RWPE1 (cell line): ENCODE measurements at regions of chr3 and their contacts with region 1.

Region 1: GRCh38 chr3:184561061-184561912 is at the start of gene EPHB3:
- DNase-seq: peak; percentile 99
- H3K27ac ChIP-seq: peak within 1 kb of the TSS; percentile 97
- CTCF ChIP-seq: peak; percentile 97

Region 2: GRCh38 chr3:184549793-184550577 is 11.3 kb before region 1 on chr3:
- CTCF ChIA-PET with region 1: interaction called, 21 read pairs
- POLR2A ChIA-PET with region 1: no interaction called
- DNase-seq: no peak
- H3K27ac ChIP-seq: no peak overlapping the region
- CTCF ChIP-seq: no peak

Region 3: DNA sequence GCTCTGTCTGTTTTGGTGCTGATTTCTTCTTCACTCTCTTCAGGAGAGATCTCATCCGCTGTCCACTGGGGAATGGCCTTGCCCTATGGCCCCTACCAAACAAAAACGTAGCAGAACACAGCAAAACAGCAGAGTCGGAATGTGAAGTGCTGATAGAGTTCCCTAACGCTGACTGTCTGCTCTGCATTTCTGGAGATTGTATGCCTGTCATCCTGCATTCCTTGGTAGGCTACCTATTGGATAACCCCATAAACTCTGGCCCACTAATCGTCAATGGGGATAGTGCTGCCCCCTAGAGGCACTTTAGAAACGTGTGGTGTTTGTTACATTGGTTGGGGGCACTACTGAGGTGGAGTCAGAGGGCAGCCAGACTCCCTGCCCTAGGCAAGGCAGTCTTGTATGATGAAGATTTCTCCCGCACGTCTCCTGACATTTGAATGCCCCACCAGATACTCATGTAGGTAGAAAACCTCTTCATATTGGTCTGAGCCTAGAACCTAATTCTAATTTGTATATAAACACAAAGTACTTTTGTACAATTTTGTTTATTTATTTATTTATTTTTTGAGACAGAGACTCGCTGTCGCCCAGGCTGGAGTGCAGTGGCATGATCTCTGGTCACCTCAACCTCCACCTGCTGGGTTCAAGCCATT is 166.2 kb after region 1 on chr3:
- CTCF ChIA-PET with region 1: interaction called, 11 read pairs
- POLR2A ChIA-PET with region 1: interaction called, 6 read pairs
- DNase-seq: peak; percentile 55
- H3K27ac ChIP-seq: no peak overlapping the region
- CTCF ChIP-seq: peak; percentile 64

Region 4: DNA sequence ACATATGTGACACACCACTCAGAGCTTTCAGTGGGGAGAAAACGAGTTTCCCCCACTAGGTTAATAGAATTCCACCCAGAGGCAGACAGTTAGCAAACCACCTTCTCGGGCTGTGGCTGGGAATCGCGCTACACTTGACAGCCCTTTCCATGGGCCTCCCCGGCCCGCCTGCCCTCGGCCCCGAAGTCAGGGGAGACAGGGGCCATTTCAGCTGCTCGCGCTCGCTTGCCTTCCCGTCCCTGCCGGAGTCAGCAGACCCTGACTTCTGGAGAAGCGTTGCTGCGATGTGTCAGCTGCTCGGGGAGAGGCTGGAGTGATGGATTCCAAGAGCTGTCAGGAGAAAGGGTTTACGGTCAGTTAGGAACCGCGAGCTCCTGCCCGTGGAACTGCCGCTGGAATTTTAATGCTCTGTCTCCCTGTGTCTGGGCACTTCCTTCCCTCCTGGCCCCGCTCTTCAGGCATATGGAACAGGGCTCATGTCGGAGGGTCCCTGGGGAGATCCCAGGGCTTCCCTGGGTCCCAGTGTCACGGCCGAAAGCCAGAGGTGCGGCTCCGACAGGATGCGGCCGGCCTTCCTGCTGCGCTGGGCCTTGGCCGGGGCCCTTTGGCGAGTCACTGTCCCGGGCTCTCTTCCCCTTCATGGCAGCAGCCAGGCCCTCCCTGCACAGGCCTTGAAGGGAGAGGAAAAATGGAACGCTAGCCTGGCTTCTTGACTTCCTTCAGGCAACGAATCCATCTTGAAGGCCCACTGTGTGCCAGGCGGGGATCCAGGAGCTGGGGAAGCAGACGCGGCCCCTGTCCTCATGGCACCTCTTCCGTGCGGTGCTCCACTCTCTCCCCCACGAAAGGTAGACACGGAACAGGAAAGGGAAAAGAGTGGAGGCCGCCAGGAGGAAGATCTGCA is 212.2 kb after region 1 on chr3:
- CTCF ChIA-PET with region 1: interaction called, 18 read pairs
- POLR2A ChIA-PET with region 1: interaction called, 3 read pairs
- DNase-seq: no peak
- H3K27ac ChIP-seq: no peak overlapping the region
- CTCF ChIP-seq: no peak

Region 5: GRCh38 chr3:184800349-184800930 is 239.2 kb after region 1 on chr3:
- CTCF ChIA-PET with region 1: interaction called, 10 read pairs
- POLR2A ChIA-PET with region 1: interaction called, 4 read pairs
- DNase-seq: no peak
- H3K27ac ChIP-seq: no peak overlapping the region
- CTCF ChIP-seq: no peak